ENCODE measurements at regions of chr11 and their contacts with region 1.

Region 1: GRCh38 chr11:100247704-100248103 is 439.4 kb upstream of the ARHGAP42 start:
- DNase-seq: no peak
- ATAC-seq: no peak
- H3K4me3 ChIP-seq: no peak overlapping the region
- H3K27ac ChIP-seq: no peak overlapping the region
- H3K4me1 ChIP-seq: no peaks in the 10 kb centered on the region
- H3K27me3 ChIP-seq: no peaks in the 10 kb centered on the region
- CTCF ChIP-seq: no peak
- POLR2A ChIP-seq: no peak
- RAD21 ChIP-seq: no peak

Region 2: DNA sequence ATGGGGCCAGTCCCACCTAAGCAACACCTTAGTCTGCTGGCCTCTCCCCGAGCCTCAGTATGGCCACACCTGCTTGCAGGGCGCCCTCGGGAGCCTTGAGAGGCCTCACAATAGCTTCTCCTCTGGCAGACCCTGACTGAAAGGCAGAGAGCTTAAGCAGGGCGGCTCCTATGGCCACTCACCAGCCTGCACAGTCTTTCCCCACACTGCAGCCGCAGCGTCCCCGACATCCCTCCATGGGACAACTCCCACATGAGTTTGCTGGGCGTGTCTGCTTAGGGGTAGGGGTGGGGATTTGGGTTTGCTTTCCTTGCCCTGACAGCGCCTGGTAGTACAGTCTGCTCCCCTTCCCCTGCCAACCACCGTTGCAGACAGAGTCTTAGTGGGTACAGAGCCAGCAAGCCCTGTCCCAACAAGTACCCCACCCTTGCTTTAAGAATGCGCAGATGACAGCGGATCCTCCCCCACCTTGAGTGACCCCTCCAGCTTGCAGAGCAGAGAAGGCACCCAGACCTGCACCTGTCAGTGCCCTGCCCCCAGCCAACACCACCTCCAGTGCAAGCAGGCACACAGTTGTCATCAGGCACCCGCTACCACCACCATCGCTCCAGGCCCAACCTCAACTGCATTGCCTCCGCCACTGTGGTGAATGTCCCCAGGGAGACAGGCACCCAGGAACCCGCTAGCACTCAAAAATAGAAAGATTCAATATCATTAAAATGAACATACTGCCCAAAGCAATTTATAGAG is 25.5 kb after region 1 on chr11:
- CTCF ChIA-PET with region 1: no interaction called
- POLR2A ChIA-PET with region 1: no interaction called
- dilution Hi-C with region 1: no loop called
- in situ Hi-C with region 1: no loop called
- intact Hi-C with region 1: loop called (anchors 1 kb)
- DNase-seq: no peak
- ATAC-seq: no peak
- H3K4me3 ChIP-seq: no peak overlapping the region
- H3K27ac ChIP-seq: no peak overlapping the region
- H3K4me1 ChIP-seq: no peaks in the 10 kb centered on the region
- H3K27me3 ChIP-seq: no peaks in the 10 kb centered on the region
- CTCF ChIP-seq: no peak
- POLR2A ChIP-seq: no peak
- RAD21 ChIP-seq: no peak